BJ (cell line): ENCODE measurements at regions of chr6 and their contacts with region 1.

Region 1: GRCh38 chr6:10248378-10248891 is 166.4 kb downstream of the TFAP2A start:
- DNase-seq: peak; percentile 70
- H3K4me3 ChIP-seq: no peak overlapping the region
- H3K27me3 ChIP-seq: no peaks in the 10 kb centered on the region
- CTCF ChIP-seq: peak; percentile 22; the same call in 1 of the 2 replicates

Region 2: GRCh38 chr6:10230559-10230958 is 17.9 kb before region 1 on chr6:
- CTCF ChIA-PET with region 1: no interaction called
- POLR2A ChIA-PET with region 1: interaction called, 12 read pairs
- DNase-seq: peak; percentile 14
- H3K4me3 ChIP-seq: no peak overlapping the region
- H3K27me3 ChIP-seq: no peaks in the 10 kb centered on the region
- CTCF ChIP-seq: no peak

Region 3: DNA sequence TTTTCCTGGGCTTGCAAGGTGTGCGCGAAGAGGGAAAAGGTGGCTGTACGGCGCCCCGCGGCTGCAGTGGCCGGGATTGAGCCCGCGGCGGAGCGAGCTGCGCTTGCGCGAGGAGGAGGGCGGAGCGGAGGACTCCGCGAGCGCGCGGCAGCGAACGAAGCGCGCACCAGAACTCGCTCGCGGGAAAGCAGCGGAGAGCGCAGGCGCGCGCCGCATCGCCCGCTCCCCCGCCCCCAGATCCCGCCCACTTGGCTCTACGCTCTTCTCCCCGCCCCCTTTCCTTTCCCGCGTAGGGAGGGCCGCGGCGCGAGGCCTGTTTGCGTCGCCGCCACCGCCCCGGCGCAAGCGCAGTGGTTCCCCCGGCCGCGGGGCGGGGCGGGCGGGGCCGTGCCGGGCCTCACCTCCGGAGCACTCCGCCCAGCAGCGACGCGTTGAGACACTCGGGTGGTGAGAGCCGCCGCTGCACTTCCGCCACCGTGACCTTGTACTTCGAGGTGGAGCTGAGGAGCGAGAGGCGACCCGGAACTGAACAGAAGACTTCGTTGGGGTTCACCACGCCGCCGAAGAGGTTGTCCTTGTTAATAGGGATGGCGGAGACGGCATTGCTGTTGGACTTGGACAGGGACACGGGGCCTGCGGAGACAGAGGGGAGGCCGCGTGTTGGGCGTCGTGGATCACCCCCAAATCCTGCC is 155.8 kb after region 1 on chr6:
- CTCF ChIA-PET with region 1: no interaction called
- POLR2A ChIA-PET with region 1: no interaction called
- DNase-seq: peak; percentile 76
- H3K4me3 ChIP-seq: peak overlapping the region; percentile 55
- H3K27me3 ChIP-seq: no peaks in the 10 kb centered on the region
- CTCF ChIP-seq: peak; percentile 55

Region 4: DNA sequence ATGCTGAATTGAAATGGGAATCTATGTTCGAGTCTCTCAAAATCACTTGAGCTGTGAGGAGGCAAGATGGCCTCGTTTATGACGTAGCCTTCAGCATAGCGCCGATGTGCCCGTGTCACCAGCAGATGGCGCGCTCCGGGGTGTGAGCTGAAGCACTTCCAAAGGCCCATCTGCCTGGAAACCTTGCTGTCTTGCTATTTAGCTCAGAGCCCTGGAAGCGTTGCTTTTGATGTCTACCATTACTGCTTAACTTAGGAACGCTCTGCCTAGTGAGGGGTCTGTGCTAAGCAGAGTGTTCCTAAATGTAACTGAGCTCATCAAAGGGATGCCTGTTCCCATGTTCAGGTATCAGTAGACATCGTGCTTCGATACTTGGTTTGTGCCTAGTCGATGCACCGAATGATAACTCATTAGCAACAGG is 706.2 kb after region 1 on chr6:
- CTCF ChIA-PET with region 1: no interaction called
- POLR2A ChIA-PET with region 1: no interaction called
- DNase-seq: no peak
- H3K4me3 ChIP-seq: no peak overlapping the region
- H3K27me3 ChIP-seq: no peaks in the 10 kb centered on the region
- CTCF ChIP-seq: peak; percentile 89